ENCODE measurements at regions of chr11 and their contacts with region 1.

Region 1: GRCh38 chr11:122754553-122755322 is 83.6 kb upstream of the CRTAM start:
- DNase-seq: peak; percentile 52
- ATAC-seq: peak; percentile 47
- H3K4me3 Mint-ChIP-seq: no peak overlapping the region
- H3K27ac Mint-ChIP-seq: no peak overlapping the region
- H3K4me1 Mint-ChIP-seq: peaks cover 60% of the 10 kb centered on the region
- H3K27me3 Mint-ChIP-seq: peaks cover 3% of the 10 kb centered on the region

Region 2: GRCh38 chr11:122360875-122361274 is 393.9 kb before region 1 on chr11:
- CTCF ChIA-PET with region 1: no interaction called
- POLR2A ChIA-PET with region 1: no interaction called
- intact Hi-C with region 1: no loop called
- DNase-seq: no peak
- ATAC-seq: no peak
- H3K4me3 Mint-ChIP-seq: no peak overlapping the region
- H3K27ac Mint-ChIP-seq: no peak overlapping the region
- H3K4me1 Mint-ChIP-seq: no peaks in the 10 kb centered on the region
- H3K27me3 Mint-ChIP-seq: peaks cover 11% of the 10 kb centered on the region

Region 3: DNA sequence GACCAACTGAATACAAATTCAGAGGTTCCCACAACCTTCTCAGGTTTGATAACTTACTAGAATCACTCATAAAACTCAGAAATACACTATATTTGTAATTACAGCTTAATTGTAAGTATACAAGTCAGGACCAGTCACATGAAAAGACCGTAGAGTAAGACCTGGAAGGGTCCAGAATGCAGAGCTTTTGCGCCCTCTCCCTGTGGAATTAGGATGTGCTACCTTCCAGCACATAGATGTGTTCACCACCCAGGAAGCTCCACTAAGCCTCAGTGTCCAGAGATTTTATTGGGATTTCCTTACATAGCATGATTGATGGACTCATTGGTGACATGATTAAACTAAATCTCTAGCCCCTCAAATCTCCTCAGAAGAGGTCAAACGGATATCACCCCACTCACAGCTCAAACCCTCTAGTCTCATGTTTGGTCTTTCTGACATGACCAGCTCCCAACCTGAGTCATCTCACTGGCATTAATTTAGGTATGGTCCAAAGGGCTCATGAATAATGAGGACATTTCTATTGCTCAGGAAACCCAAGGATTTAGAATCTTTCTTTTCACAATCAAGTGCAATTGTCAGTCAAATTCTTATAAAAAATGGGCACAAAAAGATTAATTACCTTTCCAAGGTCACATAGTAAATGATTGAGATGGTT is 176.4 kb before region 1 on chr11:
- CTCF ChIA-PET with region 1: interaction called, 4 read pairs
- POLR2A ChIA-PET with region 1: no interaction called
- intact Hi-C with region 1: loop called in 1 of 2 experiments (anchors 1 kb)
- DNase-seq: peak; percentile 16
- ATAC-seq: no peak
- H3K4me3 Mint-ChIP-seq: no peak overlapping the region
- H3K27ac Mint-ChIP-seq: no peak overlapping the region
- H3K4me1 Mint-ChIP-seq: peaks cover 8% of the 10 kb centered on the region
- H3K27me3 Mint-ChIP-seq: no peaks in the 10 kb centered on the region

Region 4: GRCh38 chr11:122628810-122629555 is 125.8 kb before region 1 on chr11:
- CTCF ChIA-PET with region 1: interaction called, 12 read pairs
- POLR2A ChIA-PET with region 1: no interaction called
- intact Hi-C with region 1: loop called (anchors 1 kb)
- DNase-seq: peak; percentile 71
- ATAC-seq: peak; percentile 79
- H3K4me3 Mint-ChIP-seq: no peak overlapping the region
- H3K27ac Mint-ChIP-seq: no peak overlapping the region
- H3K4me1 Mint-ChIP-seq: peaks cover 3% of the 10 kb centered on the region
- H3K27me3 Mint-ChIP-seq: peaks cover 2% of the 10 kb centered on the region

Region 5: GRCh38 chr11:122673701-122674100 is 81.0 kb before region 1 on chr11:
- CTCF ChIA-PET with region 1: interaction called, 16 read pairs
- POLR2A ChIA-PET with region 1: no interaction called
- intact Hi-C with region 1: no loop called
- DNase-seq: no peak
- ATAC-seq: no peak
- H3K4me3 Mint-ChIP-seq: no peak overlapping the region
- H3K27ac Mint-ChIP-seq: no peak overlapping the region
- H3K4me1 Mint-ChIP-seq: peaks cover 73% of the 10 kb centered on the region
- H3K27me3 Mint-ChIP-seq: no peaks in the 10 kb centered on the region

Region 6: GRCh38 chr11:122772945-122773344 is 18.2 kb after region 1 on chr11:
- CTCF ChIA-PET with region 1: interaction called, 17 read pairs
- POLR2A ChIA-PET with region 1: no interaction called
- intact Hi-C with region 1: loop called in 1 of 2 experiments (anchors 1 kb)
- DNase-seq: no peak
- ATAC-seq: no peak
- H3K4me3 Mint-ChIP-seq: no peak overlapping the region
- H3K27ac Mint-ChIP-seq: no peak overlapping the region
- H3K4me1 Mint-ChIP-seq: peaks cover 38% of the 10 kb centered on the region
- H3K27me3 Mint-ChIP-seq: no peaks in the 10 kb centered on the region